ENCODE measurements at regions of chrX and their contacts with region 1.

Region 1: DNA sequence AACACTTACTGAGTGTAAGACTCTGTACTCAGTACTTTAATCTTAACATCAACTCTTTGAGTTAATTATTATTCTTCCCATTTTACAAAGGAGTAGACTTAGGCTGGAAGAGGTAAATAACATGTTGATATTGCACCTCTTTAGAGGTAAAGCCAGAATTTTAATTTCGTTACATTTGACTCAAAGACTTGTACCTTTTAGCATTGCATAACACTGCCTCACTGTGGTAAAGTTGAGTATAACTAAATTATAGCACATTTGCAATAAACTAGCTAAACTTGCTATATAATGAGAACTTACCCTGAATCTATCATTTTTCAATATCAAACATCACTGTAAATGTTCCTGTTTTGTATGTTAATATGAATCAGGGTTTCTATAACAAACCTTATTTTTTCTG is 218.5 kb downstream of the PRR32 start:
- DNase-seq: no peak
- ATAC-seq: no peak
- H3K4me3 ChIP-seq: no peak overlapping the region
- H3K27ac ChIP-seq: no peak overlapping the region
- H3K4me1 ChIP-seq: no peaks in the 10 kb centered on the region
- H3K27me3 ChIP-seq: no peaks in the 10 kb centered on the region
- CTCF ChIP-seq: peak; percentile 15; the same call in 1 of the 2 replicates

Region 2: GRCh38 chrX:126670258-126670657 is 367.8 kb before region 1 on chrX:
- CTCF ChIA-PET with region 1: interaction called, 19 read pairs
- POLR2A ChIA-PET with region 1: no interaction called
- in situ Hi-C with region 1: no loop called
- intact Hi-C with region 1: no loop called
- DNase-seq: no peak
- ATAC-seq: no peak
- H3K4me3 ChIP-seq: no peak overlapping the region
- H3K27ac ChIP-seq: no peak overlapping the region
- H3K4me1 ChIP-seq: no peaks in the 10 kb centered on the region
- H3K27me3 ChIP-seq: no peaks in the 10 kb centered on the region
- CTCF ChIP-seq: no peak

Region 3: DNA sequence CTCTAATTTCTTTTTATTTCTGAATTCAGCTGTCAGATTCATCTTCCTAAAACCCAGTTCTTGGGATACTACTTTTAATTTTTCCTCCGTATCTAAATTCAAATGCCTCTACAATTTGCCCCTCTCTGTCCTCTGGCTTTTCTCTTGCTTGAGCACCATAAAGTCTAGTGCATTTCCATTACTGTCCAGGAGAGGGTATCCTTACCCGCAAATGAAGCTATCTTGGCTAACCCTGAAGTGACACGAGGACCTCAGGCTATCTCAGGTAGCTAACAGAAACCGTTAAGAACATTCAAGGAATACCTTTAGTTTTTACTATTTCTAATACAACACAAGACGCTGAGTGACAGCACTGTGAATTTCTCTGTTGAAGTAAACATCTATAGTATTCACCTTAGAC is 267.9 kb before region 1 on chrX:
- CTCF ChIA-PET with region 1: no interaction called
- POLR2A ChIA-PET with region 1: no interaction called
- in situ Hi-C with region 1: no loop called
- intact Hi-C with region 1: loop called (anchors 2 kb)
- DNase-seq: peak; percentile 8
- ATAC-seq: peak; percentile 78; the same call in 1 of the 2 replicates
- H3K4me3 ChIP-seq: no peak overlapping the region
- H3K27ac ChIP-seq: no peak overlapping the region
- H3K4me1 ChIP-seq: no peaks in the 10 kb centered on the region
- H3K27me3 ChIP-seq: no peaks in the 10 kb centered on the region
- CTCF ChIP-seq: peak; percentile 65

Region 4: DNA sequence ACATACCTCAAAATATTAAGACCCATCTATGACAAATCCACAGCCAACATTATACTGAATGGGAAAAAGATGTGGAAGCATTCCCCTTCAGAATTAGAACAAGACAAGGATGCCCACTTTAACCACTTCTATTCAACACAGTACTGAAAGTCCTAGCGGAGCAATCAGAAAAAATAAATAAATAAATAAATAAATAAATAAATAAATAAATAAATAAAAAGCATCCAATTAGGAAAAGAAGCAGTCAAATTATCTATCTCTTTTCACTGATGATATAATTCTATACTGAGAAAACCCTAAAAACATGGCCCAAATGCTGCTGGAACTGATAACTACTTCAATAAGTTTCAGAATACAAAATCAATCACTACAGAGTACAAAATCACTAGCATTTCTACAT is 151.1 kb before region 1 on chrX:
- CTCF ChIA-PET with region 1: no interaction called
- POLR2A ChIA-PET with region 1: no interaction called
- in situ Hi-C with region 1: no loop called
- intact Hi-C with region 1: no loop called
- DNase-seq: no peak
- ATAC-seq: no peak
- H3K4me3 ChIP-seq: no peak overlapping the region
- H3K27ac ChIP-seq: no peak overlapping the region
- H3K4me1 ChIP-seq: no peaks in the 10 kb centered on the region
- H3K27me3 ChIP-seq: no peaks in the 10 kb centered on the region
- CTCF ChIP-seq: no peak